ENCODE measurements at regions of chr3 and their contacts with region 1.

Region 1: GRCh38 chr3:128497387-128498126 is 4.6 kb upstream of the GATA2 start:
- DNase-seq: peak; percentile 62 to 85 (median 72)
- ATAC-seq: peak; percentile 34 to 83 (median 74)
- H3K4me3 ChIP-seq: peak overlapping the region; percentile 25 to 66 (median 56)
- H3K27ac ChIP-seq: peak overlapping the region in 3 of 12 donors; percentile 0 to 51 (median 29)
- H3K4me1 ChIP-seq: peaks cover 8 to 29% (median 17%) of the 10 kb centered on the region in 12 donors
- H3K27me3 ChIP-seq: peaks cover 3 to 74% (median 28%) of the 10 kb centered on the region in 9 donors
- CTCF ChIP-seq: peak; percentile 44 to 93 (median 72)
- POLR2A ChIP-seq: no peak

Region 2: GRCh38 chr3:128075516-128076482 is 421.8 kb before region 1 on chr3:
- intact Hi-C with region 1: loop called in 1 of 10 experiments (anchors 5 kb)
- DNase-seq: peak; percentile 86 to 95 (median 91)
- ATAC-seq: peak; percentile 81 to 91 (median 85)
- H3K4me3 ChIP-seq: peak overlapping the region; percentile 8 to 63 (median 52)
- H3K27ac ChIP-seq: peak overlapping the region in 6 of 12 donors; percentile 26 to 60 (median 50)
- H3K4me1 ChIP-seq: peaks cover 0 to 65% (median 29%) of the 10 kb centered on the region in 12 donors
- H3K27me3 ChIP-seq: no peaks in the 10 kb centered on the region
- CTCF ChIP-seq: peak; percentile 94 to 99 (median 98)
- POLR2A ChIP-seq: peak in 1 of 2 donors; percentile 36

Region 3: GRCh38 chr3:128170805-128171516 is 326.6 kb before region 1 on chr3:
- intact Hi-C with region 1: loop called (anchors 2 to 5 kb)
- DNase-seq: peak in 4 of 5 donors; percentile 55 to 64 (median 62)
- ATAC-seq: peak; percentile 54 to 75 (median 72)
- H3K4me3 ChIP-seq: no peak overlapping the region
- H3K27ac ChIP-seq: no peak overlapping the region
- H3K4me1 ChIP-seq: peaks cover 0 to 73% (median 40%) of the 10 kb centered on the region in 12 donors
- H3K27me3 ChIP-seq: no peaks in the 10 kb centered on the region
- CTCF ChIP-seq: peak; percentile 49 to 88 (median 68)
- POLR2A ChIP-seq: no peak

Region 4: GRCh38 chr3:128307029-128307633 is 190.4 kb before region 1 on chr3:
- intact Hi-C with region 1: loop called in 3 of 10 experiments (anchors 5 to 10 kb)
- DNase-seq: peak in 1 of 5 donors; percentile 9
- ATAC-seq: peak in 1 of 4 donors; percentile 18
- H3K4me3 ChIP-seq: no peak overlapping the region
- H3K27ac ChIP-seq: no peak overlapping the region
- H3K4me1 ChIP-seq: peaks cover 0 to 40% (median 8%) of the 10 kb centered on the region in 12 donors
- H3K27me3 ChIP-seq: no peaks in the 10 kb centered on the region
- CTCF ChIP-seq: peak in 2 of 12 donors; percentile 20 to 28
- POLR2A ChIP-seq: no peak

Region 5: GRCh38 chr3:128426128-128426921 is 71.2 kb before region 1 on chr3:
- intact Hi-C with region 1: loop called (anchors 1 to 5 kb)
- DNase-seq: peak in 4 of 5 donors; percentile 36 to 83 (median 46)
- ATAC-seq: peak; percentile 21 to 93 (median 80)
- H3K4me3 ChIP-seq: peak overlapping the region in 10 of 12 donors; percentile 12 to 50 (median 34)
- H3K27ac ChIP-seq: no peak overlapping the region
- H3K4me1 ChIP-seq: peaks cover 0 to 14% (median 4%) of the 10 kb centered on the region in 12 donors
- H3K27me3 ChIP-seq: peaks cover 0 to 30% (median 1%) of the 10 kb centered on the region in 9 donors
- CTCF ChIP-seq: peak; percentile 52 to 99 (median 89)
- POLR2A ChIP-seq: no peak

Region 6: GRCh38 chr3:128438488-128439072 is 59.0 kb before region 1 on chr3:
- intact Hi-C with region 1: no loop called
- DNase-seq: no peak
- ATAC-seq: no peak
- H3K4me3 ChIP-seq: no peak overlapping the region
- H3K27ac ChIP-seq: no peak overlapping the region
- H3K4me1 ChIP-seq: no peaks in the 10 kb centered on the region
- H3K27me3 ChIP-seq: peaks cover 0 to 17% (median 3%) of the 10 kb centered on the region in 9 donors
- CTCF ChIP-seq: peak in 5 of 12 donors; percentile 13 to 35 (median 24)
- POLR2A ChIP-seq: no peak

Region 7: GRCh38 chr3:128584412-128585020 is 87.0 kb after region 1 on chr3:
- intact Hi-C with region 1: loop called in 4 of 10 experiments (anchors 5 to 10 kb)
- DNase-seq: peak; percentile 66 to 84 (median 75)
- ATAC-seq: peak; percentile 95 to 99 (median 99)
- H3K4me3 ChIP-seq: no peak overlapping the region
- H3K27ac ChIP-seq: no peak overlapping the region
- H3K4me1 ChIP-seq: peaks cover 0 to 8% (median 0%) of the 10 kb centered on the region in 12 donors
- H3K27me3 ChIP-seq: no peaks in the 10 kb centered on the region
- CTCF ChIP-seq: peak; percentile 54 to 80 (median 69)
- POLR2A ChIP-seq: no peak

Measured in heart left ventricle (tissue), 16 donors.